Calu3 (cell line): ENCODE measurements at regions of chr13 and their contacts with region 1.

Region 1: GRCh38 chr13:103130681-103131210 is 64.5 kb upstream of the SLC10A2 start:
- DNase-seq: no peak
- H3K4me3 Mint-ChIP-seq: no peak overlapping the region
- H3K27ac Mint-ChIP-seq: peak overlapping the region; percentile 33
- H3K4me1 Mint-ChIP-seq: peaks cover 8% of the 10 kb centered on the region
- H3K27me3 Mint-ChIP-seq: no peaks in the 10 kb centered on the region
- CTCF ChIP-seq: no peak

Region 2: GRCh38 chr13:103067751-103068555 is 62.8 kb before region 1 on chr13:
- CTCF ChIA-PET with region 1: no interaction called
- intact Hi-C with region 1: loop called (anchors 2 kb)
- DNase-seq: no peak
- H3K4me3 Mint-ChIP-seq: no peak overlapping the region
- H3K27ac Mint-ChIP-seq: no peak overlapping the region
- H3K4me1 Mint-ChIP-seq: no peaks in the 10 kb centered on the region
- H3K27me3 Mint-ChIP-seq: no peaks in the 10 kb centered on the region
- CTCF ChIP-seq: no peak

Region 3: GRCh38 chr13:103213152-103213551 is 82.4 kb after region 1 on chr13:
- CTCF ChIA-PET with region 1: no interaction called
- intact Hi-C with region 1: no loop called
- DNase-seq: no peak
- H3K4me3 Mint-ChIP-seq: no peak overlapping the region
- H3K27ac Mint-ChIP-seq: no peak overlapping the region
- H3K4me1 Mint-ChIP-seq: no peaks in the 10 kb centered on the region
- H3K27me3 Mint-ChIP-seq: no peaks in the 10 kb centered on the region
- CTCF ChIP-seq: no peak